ENCODE measurements at regions of chr1 and their contacts with region 1.

Region 1: GRCh38 chr1:241499910-241500309 is 19.6 kb downstream of the FH start:
- DNase-seq: peak; percentile 20
- H3K4me3 ChIP-seq: no peak overlapping the region
- H3K27ac ChIP-seq: no peak overlapping the region
- H3K4me1 ChIP-seq: no peaks in the 10 kb centered on the region
- H3K27me3 ChIP-seq: no peaks in the 10 kb centered on the region
- CTCF ChIP-seq: peak; percentile 54

Region 2: GRCh38 chr1:240888039-240888786 is 611.7 kb before region 1 on chr1:
- CTCF ChIA-PET with region 1: no interaction called
- POLR2A ChIA-PET with region 1: no interaction called
- intact Hi-C with region 1: loop called (anchors 5 kb)
- DNase-seq: peak; percentile 1
- H3K4me3 ChIP-seq: no peak overlapping the region
- H3K27ac ChIP-seq: no peak overlapping the region
- H3K4me1 ChIP-seq: no peaks in the 10 kb centered on the region
- H3K27me3 ChIP-seq: no peaks in the 10 kb centered on the region
- CTCF ChIP-seq: peak; percentile 71

Measured in A673 (cell line).